Activated CD4-positive, alpha-beta T cell treated with anti-CD3 and anti-CD28 coated beads, Interleukin-2, amount 10 ng/mL, durations not matched to agents 24 days and 14 days (primary cell): ENCODE measurements at regions of chr3 and their contacts with region 1.

Region 1: GRCh38 chr3:37210230-37210629 is 35.8 kb upstream of the LRRFIP2 start:
- DNase-seq: no peak
- H3K4me3 Mint-ChIP-seq: no peak overlapping the region
- H3K27ac Mint-ChIP-seq: no peak overlapping the region
- H3K4me1 Mint-ChIP-seq: no peaks in the 10 kb centered on the region
- H3K27me3 Mint-ChIP-seq: peaks cover 2% of the 10 kb centered on the region

Region 2: DNA sequence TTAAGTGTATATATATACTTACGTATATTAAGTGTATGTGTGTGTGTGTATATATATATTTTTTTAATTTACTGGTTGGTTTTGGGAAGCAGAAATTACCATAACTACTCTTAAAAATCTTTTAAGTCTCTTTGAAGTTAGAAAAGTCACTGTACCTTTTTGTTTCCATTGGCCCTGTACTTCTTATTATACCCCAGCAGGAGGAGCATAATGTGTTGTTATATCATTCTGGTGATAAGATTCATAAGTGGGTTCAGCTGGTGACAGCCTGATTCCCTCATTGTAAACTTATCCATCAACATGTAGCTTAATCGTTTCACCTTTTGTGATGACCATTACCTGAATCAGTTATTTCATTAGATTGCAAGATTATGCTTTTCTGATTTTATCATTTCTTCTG is 186.1 kb before region 1 on chr3:
- intact Hi-C with region 1: loop called (anchors 1 kb)
- DNase-seq: no peak
- H3K4me3 Mint-ChIP-seq: no peak overlapping the region
- H3K27ac Mint-ChIP-seq: no peak overlapping the region
- H3K4me1 Mint-ChIP-seq: peaks cover 8% of the 10 kb centered on the region
- H3K27me3 Mint-ChIP-seq: no peaks in the 10 kb centered on the region

Region 3: DNA sequence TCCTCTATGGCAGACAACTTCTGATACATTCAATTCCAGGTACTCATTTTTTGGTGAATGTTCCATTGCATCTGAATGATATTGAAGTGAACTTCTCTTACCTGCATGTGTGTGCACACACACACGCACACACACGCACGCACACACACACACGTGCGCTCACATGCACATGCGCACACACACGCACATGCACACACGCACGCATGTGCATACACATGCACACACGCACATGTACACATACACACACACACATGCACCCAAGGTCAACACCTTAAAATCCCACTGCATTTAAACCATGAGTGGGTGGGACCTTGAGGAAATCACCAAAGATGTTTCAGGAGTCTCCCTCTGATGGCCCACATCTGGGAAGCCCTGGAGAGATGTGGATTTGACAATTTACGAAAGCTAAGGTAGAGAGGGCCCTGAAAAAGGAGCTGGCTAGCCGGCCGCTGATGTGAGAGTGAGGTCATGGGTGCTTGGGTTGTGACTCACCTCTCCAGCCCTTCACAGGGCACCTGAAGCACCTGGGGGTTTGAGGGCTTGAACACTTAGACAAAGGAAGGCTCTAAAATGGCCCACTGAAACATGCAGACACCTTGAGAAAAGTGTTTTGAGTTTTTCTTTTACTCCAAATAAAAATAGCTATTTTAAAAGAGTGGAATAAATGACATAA is 233.3 kb after region 1 on chr3:
- intact Hi-C with region 1: no loop called
- DNase-seq: no peak
- H3K4me3 Mint-ChIP-seq: no peak overlapping the region
- H3K27ac Mint-ChIP-seq: no peak overlapping the region
- H3K4me1 Mint-ChIP-seq: no peaks in the 10 kb centered on the region
- H3K27me3 Mint-ChIP-seq: peaks cover 22% of the 10 kb centered on the region